ENCODE measurements at regions of chr10 and their contacts with region 1.

Region 1: GRCh38 chr10:29517352-29517923 is 117.3 kb downstream of the SVIL start:
- DNase-seq: peak; percentile 38 to 52 (median 42)
- ATAC-seq: peak; percentile 93
- H3K4me3 ChIP-seq: no peak overlapping the region
- H3K27ac ChIP-seq: no peak overlapping the region
- H3K4me1 ChIP-seq: no peaks in the 10 kb centered on the region
- H3K27me3 ChIP-seq: peaks cover 8 to 27% of the 10 kb centered on the region in 2 experiments; a peak in 4 of 5 replicates
- CTCF ChIP-seq: peak; percentile 61 to 71 (median 64)
- EP300 ChIP-seq: no peak
- POLR2A ChIP-seq: no peak
- RAD21 ChIP-seq: peak in 1 of 2 experiments; percentile 28; a peak in 1 of 4 replicates

Region 2: GRCh38 chr10:29377333-29377961 is 140.0 kb before region 1 on chr10:
- CTCF ChIA-PET with region 1: no interaction called
- POLR2A ChIA-PET with region 1: no interaction called
- in situ Hi-C with region 1: no loop called
- intact Hi-C with region 1: loop called (anchors 5 kb)
- DNase-seq: peak; percentile 28 to 55 (median 40)
- ATAC-seq: peak; percentile 76
- H3K4me3 ChIP-seq: no peak overlapping the region
- H3K27ac ChIP-seq: no peak overlapping the region
- H3K4me1 ChIP-seq: no peaks in the 10 kb centered on the region
- H3K27me3 ChIP-seq: peaks cover 12 to 25% of the 10 kb centered on the region in 2 experiments; a peak in 4 of 5 replicates
- CTCF ChIP-seq: peak; percentile 53 to 90 (median 61); a peak in 5 of 6 replicates
- EP300 ChIP-seq: no peak
- POLR2A ChIP-seq: no peak
- RAD21 ChIP-seq: peak; percentile 64 to 65

Region 3: GRCh38 chr10:29900865-29901264 is 383.4 kb after region 1 on chr10:
- CTCF ChIA-PET with region 1: no interaction called
- POLR2A ChIA-PET with region 1: no interaction called
- in situ Hi-C with region 1: no loop called
- intact Hi-C with region 1: no loop called
- DNase-seq: no peak
- ATAC-seq: no peak
- H3K4me3 ChIP-seq: no peak overlapping the region
- H3K27ac ChIP-seq: no peak overlapping the region
- H3K4me1 ChIP-seq: no peaks in the 10 kb centered on the region
- H3K27me3 ChIP-seq: no peaks in the 10 kb centered on the region
- CTCF ChIP-seq: no peak
- EP300 ChIP-seq: no peak
- POLR2A ChIP-seq: no peak
- RAD21 ChIP-seq: no peak